CD4-positive, alpha-beta memory T cell (primary cell): ENCODE measurements at regions of chr5 and their contacts with region 1.

Region 1: GRCh38 chr5:141968914-141969608 is at the start of gene RNF14:
- DNase-seq: peak; percentile 92 to 94 (median 93)
- H3K4me3 ChIP-seq: peak within 1 kb of the TSS; percentile 66 to 85
- H3K4me3 Mint-ChIP-seq: peak within 1 kb of the TSS; percentile 87 to 98 (median 94)
- H3K27ac ChIP-seq: peak within 1 kb of the TSS; percentile 96
- H3K27ac Mint-ChIP-seq: peak within 1 kb of the TSS; percentile 97 to 99 (median 98)
- H3K4me1 ChIP-seq: peaks cover 23% of the 10 kb centered on the region
- H3K4me1 Mint-ChIP-seq: peaks cover 20 to 42% (median 30%) of the 10 kb centered on the region in 4 donors
- H3K27me3 ChIP-seq: no peaks in the 10 kb centered on the region
- H3K27me3 Mint-ChIP-seq: no peaks in the 10 kb centered on the region
- total RNA-seq, gene RNF14: 35.4 to 38.5 TPM

Region 2: GRCh38 chr5:141650851-141651727 is 318.0 kb before region 1 on chr5 and contains the start of gene FCHSD1:
- CTCF ChIA-PET with region 1: interaction called, 4 read pairs
- POLR2A ChIA-PET with region 1: interaction called, 12 read pairs
- intact Hi-C with region 1: no loop called
- DNase-seq: peak; percentile 75 to 81 (median 76)
- H3K4me3 ChIP-seq: peak within 1 kb of the TSS; percentile 42 to 74
- H3K4me3 Mint-ChIP-seq: peak within 1 kb of the TSS; percentile 87 to 96 (median 93)
- H3K27ac ChIP-seq: peak within 1 kb of the TSS; percentile 50
- H3K27ac Mint-ChIP-seq: peak within 1 kb of the TSS; percentile 86 to 97 (median 94)
- H3K4me1 ChIP-seq: peaks cover 29% of the 10 kb centered on the region
- H3K4me1 Mint-ChIP-seq: peaks cover 27 to 49% (median 38%) of the 10 kb centered on the region in 4 donors
- H3K27me3 ChIP-seq: no peaks in the 10 kb centered on the region
- H3K27me3 Mint-ChIP-seq: no peaks in the 10 kb centered on the region
- total RNA-seq, gene FCHSD1: 106 to 110 TPM

Region 3: GRCh38 chr5:141701360-141702119 is 267.5 kb before region 1 on chr5:
- CTCF ChIA-PET with region 1: interaction called, 250 read pairs
- POLR2A ChIA-PET with region 1: interaction called, 14 read pairs
- intact Hi-C with region 1: no loop called
- DNase-seq: no peak
- H3K4me3 ChIP-seq: peak overlapping the region in 1 of 2 donors; percentile 57
- H3K4me3 Mint-ChIP-seq: peak overlapping the region in 5 of 8 donors; percentile 78 to 91 (median 87)
- H3K27ac ChIP-seq: no peak overlapping the region
- H3K27ac Mint-ChIP-seq: peak overlapping the region in 5 of 7 donors; percentile 62 to 90 (median 83)
- H3K4me1 ChIP-seq: peaks cover 17% of the 10 kb centered on the region
- H3K4me1 Mint-ChIP-seq: peaks cover 9 to 29% (median 14%) of the 10 kb centered on the region in 4 donors
- H3K27me3 ChIP-seq: peaks cover 7% of the 10 kb centered on the region
- H3K27me3 Mint-ChIP-seq: peaks cover 3 to 13% of the 10 kb centered on the region in 2 donors

Region 4: DNA sequence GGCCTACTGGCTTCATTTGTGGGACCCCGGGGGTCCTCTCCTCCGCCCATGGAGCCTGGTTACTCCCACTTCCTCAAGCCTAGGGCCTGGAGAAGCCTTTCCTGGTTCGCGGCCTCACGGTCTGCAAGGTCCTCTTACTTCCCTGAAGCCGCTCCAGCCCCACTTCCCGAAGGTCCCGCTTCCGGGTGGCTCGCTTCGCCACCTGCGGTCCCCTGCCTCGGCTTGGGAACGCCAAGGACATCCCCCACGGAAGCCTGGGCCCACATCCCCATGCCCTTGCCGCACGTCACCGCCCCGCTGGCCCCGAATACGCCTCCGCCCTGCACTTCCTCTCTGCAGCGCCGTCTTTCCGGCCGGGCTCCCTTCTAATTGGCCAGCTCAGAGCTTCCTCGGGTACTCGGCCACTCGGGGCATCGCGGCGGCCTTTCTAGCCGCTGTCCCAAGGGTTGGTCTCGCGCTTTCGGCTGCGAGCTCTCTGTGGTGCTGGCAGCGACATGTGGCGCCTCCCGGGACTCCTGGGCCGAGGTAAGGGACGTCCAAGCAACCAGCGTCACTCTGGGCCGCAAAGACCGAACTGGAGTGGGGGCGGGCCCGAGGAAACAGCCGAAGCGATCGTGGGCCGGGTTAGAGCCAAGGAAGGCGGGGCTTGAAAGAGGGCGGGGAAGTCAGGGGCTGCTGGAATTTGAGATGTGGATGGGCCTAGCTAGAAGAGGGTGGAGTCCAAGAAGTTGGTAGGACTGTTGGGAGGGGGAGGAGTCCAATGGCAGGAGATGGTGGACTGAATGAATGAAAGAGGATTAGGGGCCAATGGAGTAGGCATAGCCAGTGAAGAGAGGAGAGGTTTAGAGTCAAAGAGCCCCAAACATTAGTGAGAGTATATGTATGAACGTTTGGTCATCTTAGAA is 45.4 kb before region 1 on chr5 and contains the start of gene DELE1:
- CTCF ChIA-PET with region 1: interaction called, 17 read pairs
- POLR2A ChIA-PET with region 1: interaction called, 33 read pairs
- intact Hi-C with region 1: loop called (anchors 2 kb)
- DNase-seq: peak; percentile 89 to 92 (median 92)
- H3K4me3 ChIP-seq: peak within 1 kb of the TSS; percentile 76 to 93
- H3K4me3 Mint-ChIP-seq: peak within 1 kb of the TSS; percentile 87 to 97 (median 92)
- H3K27ac ChIP-seq: peak within 1 kb of the TSS; percentile 99
- H3K27ac Mint-ChIP-seq: peak within 1 kb of the TSS; percentile 95 to 98 (median 97)
- H3K4me1 ChIP-seq: peaks cover 31% of the 10 kb centered on the region
- H3K4me1 Mint-ChIP-seq: peaks cover 14 to 48% (median 34%) of the 10 kb centered on the region in 4 donors
- H3K27me3 ChIP-seq: no peaks in the 10 kb centered on the region
- H3K27me3 Mint-ChIP-seq: no peaks in the 10 kb centered on the region
- total RNA-seq, gene DELE1: 73.2 to 83.1 TPM

Region 5: GRCh38 chr5:142012792-142013388 is 43.8 kb after region 1 on chr5 and contains the start of gene GNPDA1:
- CTCF ChIA-PET with region 1: interaction called, 26 read pairs
- POLR2A ChIA-PET with region 1: interaction called, 20 read pairs
- intact Hi-C with region 1: loop called (anchors 2 kb)
- DNase-seq: peak; percentile 56 to 72 (median 62)
- H3K4me3 ChIP-seq: peak within 1 kb of the TSS; percentile 79 to 84
- H3K4me3 Mint-ChIP-seq: peak within 1 kb of the TSS; percentile 86 to 94 (median 88)
- H3K27ac ChIP-seq: peak within 1 kb of the TSS; percentile 70
- H3K27ac Mint-ChIP-seq: peak within 1 kb of the TSS; percentile 91 to 96 (median 95)
- H3K4me1 ChIP-seq: peaks cover 64% of the 10 kb centered on the region
- H3K4me1 Mint-ChIP-seq: peaks cover 44 to 71% (median 56%) of the 10 kb centered on the region in 4 donors
- H3K27me3 ChIP-seq: no peaks in the 10 kb centered on the region
- H3K27me3 Mint-ChIP-seq: no peaks in the 10 kb centered on the region
- total RNA-seq, gene GNPDA1: 23.0 to 24.1 TPM

Region 6: DNA sequence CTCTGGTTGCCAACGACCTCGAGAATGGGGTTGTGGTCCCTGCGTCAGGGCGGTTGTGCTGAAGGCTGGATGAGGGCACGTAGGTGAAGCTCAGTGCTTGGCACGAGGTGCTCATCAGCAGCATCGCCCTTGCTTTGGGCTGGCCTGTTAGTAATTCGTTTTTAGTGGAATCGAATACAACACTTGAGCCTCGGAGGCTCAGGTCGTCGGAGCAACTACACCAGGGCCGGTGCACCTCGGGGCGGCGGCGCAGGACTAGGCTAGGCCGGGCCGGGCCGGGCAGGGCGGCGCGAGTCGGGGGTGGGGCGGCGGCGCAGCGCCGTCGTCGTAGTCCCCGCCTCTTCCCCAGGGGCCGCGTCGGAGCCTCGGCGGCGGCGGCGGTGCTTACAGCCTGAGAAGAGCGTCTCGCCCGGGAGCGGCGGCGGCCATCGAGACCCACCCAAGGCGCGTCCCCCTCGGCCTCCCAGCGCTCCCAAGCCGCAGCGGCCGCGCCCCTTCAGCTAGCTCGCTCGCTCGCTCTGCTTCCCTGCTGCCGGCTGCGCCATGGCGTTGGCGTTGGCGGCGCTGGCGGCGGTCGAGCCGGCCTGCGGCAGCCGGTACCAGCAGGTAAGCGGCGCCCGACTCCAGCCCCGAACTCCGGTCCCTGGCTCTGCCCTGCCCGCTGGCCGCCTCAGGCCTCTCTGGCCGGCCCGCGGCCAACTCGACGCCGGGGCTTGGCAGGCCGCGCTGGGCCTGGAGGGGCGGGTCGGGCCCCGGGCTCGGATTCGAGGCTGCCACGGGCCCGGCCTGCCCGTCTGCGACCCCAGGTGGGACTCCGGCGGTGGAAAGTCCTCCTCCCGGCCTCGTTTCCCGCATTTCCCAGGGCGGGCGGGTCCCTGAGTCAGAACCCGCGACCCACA is 139.6 kb after region 1 on chr5 and contains the start of gene NDFIP1:
- CTCF ChIA-PET with region 1: interaction called, 16 read pairs
- POLR2A ChIA-PET with region 1: interaction called, 18 read pairs
- intact Hi-C with region 1: loop called (anchors 1 kb)
- DNase-seq: peak; percentile 84 to 90 (median 88)
- H3K4me3 ChIP-seq: peak within 1 kb of the TSS; percentile 78 to 80
- H3K4me3 Mint-ChIP-seq: peak within 1 kb of the TSS; percentile 94 to 100 (median 96)
- H3K27ac ChIP-seq: peak within 1 kb of the TSS; percentile 95
- H3K27ac Mint-ChIP-seq: peak within 1 kb of the TSS; percentile 95 to 99 (median 99)
- H3K4me1 ChIP-seq: peaks cover 71% of the 10 kb centered on the region
- H3K4me1 Mint-ChIP-seq: peaks cover 46 to 76% (median 56%) of the 10 kb centered on the region in 4 donors
- H3K27me3 ChIP-seq: no peaks in the 10 kb centered on the region
- H3K27me3 Mint-ChIP-seq: no peaks in the 10 kb centered on the region
- total RNA-seq, gene NDFIP1: 73.8 to 78.4 TPM